Testis (tissue), 5 donors: ENCODE measurements at regions of chr10 and their contacts with region 1.

Region 1: GRCh38 chr10:23994479-23995046 is 214.4 kb upstream of the KIAA1217 start:
- DNase-seq: peak; percentile 88
- H3K4me3 ChIP-seq: no peak overlapping the region
- H3K27ac ChIP-seq: no peak overlapping the region
- H3K4me1 ChIP-seq: peaks cover 6% of the 10 kb centered on the region
- H3K27me3 ChIP-seq: no peaks in the 10 kb centered on the region
- CTCF ChIP-seq: peak; percentile 86 to 89 (median 87)
- POLR2A ChIP-seq: no peak

Region 2: DNA sequence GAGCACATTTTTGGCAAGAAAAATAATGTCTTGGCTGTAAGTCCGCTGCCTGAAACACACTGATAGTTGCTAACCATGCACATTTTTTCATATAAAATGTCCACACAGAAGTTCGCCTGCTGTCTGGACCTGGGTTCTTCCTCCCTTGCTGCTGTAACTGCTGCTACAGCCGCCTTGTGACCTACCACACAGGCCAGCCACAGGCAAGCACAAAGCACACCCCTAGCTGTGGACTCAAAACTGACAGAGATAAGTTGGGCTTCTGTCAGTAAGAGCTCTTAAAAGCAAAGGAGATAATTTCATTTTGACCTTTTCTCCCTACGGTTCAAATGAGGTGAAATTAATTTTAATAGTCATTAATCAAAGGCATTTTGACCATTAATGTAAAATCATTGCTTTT is 201.0 kb before region 1 on chr10:
- intact Hi-C with region 1: no loop called
- DNase-seq: no peak
- H3K4me3 ChIP-seq: no peak overlapping the region
- H3K27ac ChIP-seq: no peak overlapping the region
- H3K4me1 ChIP-seq: no peaks in the 10 kb centered on the region
- H3K27me3 ChIP-seq: no peaks in the 10 kb centered on the region
- CTCF ChIP-seq: no peak
- POLR2A ChIP-seq: no peak

Region 3: DNA sequence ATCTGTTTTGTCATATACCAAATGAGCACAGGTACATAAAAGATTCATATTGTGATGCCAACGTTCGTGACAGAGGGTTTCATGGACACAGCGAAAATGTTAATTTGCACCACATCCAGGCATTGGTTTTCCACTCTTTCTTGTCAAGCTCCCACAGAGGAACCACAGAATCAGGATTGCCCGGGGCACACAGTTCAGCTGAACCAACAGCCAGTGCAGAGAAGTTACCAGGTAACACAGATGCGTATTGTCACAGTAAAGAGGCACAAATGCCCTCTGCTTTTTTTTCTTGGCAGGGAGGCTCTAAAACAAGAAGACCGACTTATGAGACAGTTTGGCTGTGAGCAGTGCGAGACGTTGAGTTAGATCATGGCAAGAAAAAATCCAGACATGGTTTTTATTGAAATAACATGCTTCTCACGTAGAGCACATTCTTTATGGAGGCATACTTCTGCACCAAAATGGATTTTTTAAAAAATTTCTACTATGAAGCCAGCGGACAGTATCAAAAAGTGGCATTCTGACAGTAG is 116.7 kb before region 1 on chr10:
- intact Hi-C with region 1: no loop called
- DNase-seq: no peak
- H3K4me3 ChIP-seq: no peak overlapping the region
- H3K27ac ChIP-seq: no peak overlapping the region
- H3K4me1 ChIP-seq: no peaks in the 10 kb centered on the region
- H3K27me3 ChIP-seq: no peaks in the 10 kb centered on the region
- CTCF ChIP-seq: no peak
- POLR2A ChIP-seq: no peak

Region 4: GRCh38 chr10:24197263-24197662 is 202.7 kb after region 1 on chr10:
- intact Hi-C with region 1: loop called (anchors 10 kb)
- DNase-seq: no peak
- H3K4me3 ChIP-seq: no peak overlapping the region
- H3K27ac ChIP-seq: no peak overlapping the region
- H3K4me1 ChIP-seq: no peaks in the 10 kb centered on the region
- H3K27me3 ChIP-seq: no peaks in the 10 kb centered on the region
- CTCF ChIP-seq: no peak
- POLR2A ChIP-seq: no peak

Region 5: DNA sequence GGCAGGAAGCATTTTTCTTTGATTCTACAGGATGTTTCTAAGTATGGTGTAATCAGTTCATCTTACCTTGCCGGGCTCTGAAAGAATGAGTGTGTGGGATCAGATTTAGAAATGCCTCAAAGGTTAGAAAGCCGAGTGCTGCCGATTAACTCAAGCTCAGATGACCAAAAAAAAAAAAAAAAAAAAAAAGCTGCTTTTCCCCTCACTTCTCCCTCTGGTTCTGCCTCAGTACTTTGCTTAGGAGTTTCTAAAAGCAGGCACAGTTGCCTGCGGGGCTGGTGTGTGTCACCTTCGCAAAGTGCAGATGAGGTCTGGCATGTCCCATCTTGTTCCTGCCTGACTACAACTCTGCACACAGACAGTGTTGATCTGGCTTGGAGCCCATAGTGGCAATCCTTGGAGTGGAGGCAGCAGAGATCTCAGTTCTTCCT is 261.3 kb after region 1 on chr10:
- intact Hi-C with region 1: no loop called
- DNase-seq: peak; percentile 46
- H3K4me3 ChIP-seq: no peak overlapping the region
- H3K27ac ChIP-seq: peak overlapping the region; percentile 36 to 81
- H3K4me1 ChIP-seq: peaks cover 32% of the 10 kb centered on the region
- H3K27me3 ChIP-seq: no peaks in the 10 kb centered on the region
- CTCF ChIP-seq: no peak
- POLR2A ChIP-seq: no peak

Region 6: DNA sequence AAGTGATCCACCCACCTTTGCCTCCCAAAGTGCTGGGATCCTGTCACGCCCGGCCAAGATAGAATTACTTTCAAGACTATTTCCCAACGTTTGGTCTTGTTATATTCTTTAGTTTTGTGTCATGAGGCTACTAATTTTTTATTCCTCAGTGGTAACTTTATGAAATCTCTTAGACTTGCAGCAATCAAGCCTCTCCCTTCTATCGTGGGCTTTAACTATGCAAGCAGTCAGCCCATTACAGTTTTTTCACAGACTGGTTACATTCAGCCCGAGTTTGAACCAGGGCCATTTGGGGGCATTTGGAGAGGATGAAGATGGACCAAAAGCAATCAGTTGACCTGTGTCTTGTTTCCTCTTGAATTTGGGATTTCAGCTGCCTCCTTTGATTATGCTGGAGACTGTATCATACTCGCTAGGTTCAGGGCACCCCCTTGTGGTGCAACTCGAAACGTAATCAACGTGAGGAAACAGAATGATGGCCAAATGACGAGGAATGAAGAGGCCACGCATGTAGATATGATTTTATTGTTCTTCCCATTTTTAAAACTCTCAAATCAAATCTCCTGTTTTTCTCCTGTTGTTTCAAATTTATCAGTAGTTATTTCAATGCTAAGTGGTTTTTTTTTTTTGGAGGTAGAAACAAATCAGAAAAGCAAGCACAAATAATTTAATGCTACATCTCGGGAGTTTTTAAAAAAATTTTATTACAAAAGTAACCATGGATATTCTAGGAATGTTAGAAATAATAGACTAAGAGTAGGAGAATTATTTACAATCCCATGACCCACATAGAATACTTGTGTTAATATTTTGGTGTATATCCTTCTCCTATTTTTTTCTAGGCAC is 365.9 kb after region 1 on chr10:
- intact Hi-C with region 1: loop called (anchors 10 kb)
- DNase-seq: peak; percentile 92
- H3K4me3 ChIP-seq: no peak overlapping the region
- H3K27ac ChIP-seq: no peak overlapping the region
- H3K4me1 ChIP-seq: peaks cover 9% of the 10 kb centered on the region
- H3K27me3 ChIP-seq: no peaks in the 10 kb centered on the region
- CTCF ChIP-seq: peak; percentile 54 to 80 (median 54)
- POLR2A ChIP-seq: no peak

Region 7: GRCh38 chr10:24518981-24519597 is 524.5 kb after region 1 on chr10:
- intact Hi-C with region 1: loop called (anchors 10 kb)
- DNase-seq: peak; percentile 86
- H3K4me3 ChIP-seq: no peak overlapping the region
- H3K27ac ChIP-seq: peak overlapping the region in 1 of 2 donors; percentile 50
- H3K4me1 ChIP-seq: peaks cover 8% of the 10 kb centered on the region
- H3K27me3 ChIP-seq: no peaks in the 10 kb centered on the region
- CTCF ChIP-seq: peak; percentile 76 to 81 (median 76)
- POLR2A ChIP-seq: no peak